ENCODE measurements at regions of chr5 and their contacts with region 1.

Region 1: GRCh38 chr5:81751009-81751835 is at the start of gene SSBP2:
- DNase-seq: peak; percentile 98
- H3K4me3 Mint-ChIP-seq: peak within 1 kb of the TSS; percentile 92
- H3K27ac Mint-ChIP-seq: peak within 1 kb of the TSS; percentile 80
- H3K4me1 Mint-ChIP-seq: peaks cover 27% of the 10 kb centered on the region
- H3K27me3 Mint-ChIP-seq: no peaks in the 10 kb centered on the region
- total RNA-seq, gene SSBP2: 14.5 to 14.7 TPM

Region 2: DNA sequence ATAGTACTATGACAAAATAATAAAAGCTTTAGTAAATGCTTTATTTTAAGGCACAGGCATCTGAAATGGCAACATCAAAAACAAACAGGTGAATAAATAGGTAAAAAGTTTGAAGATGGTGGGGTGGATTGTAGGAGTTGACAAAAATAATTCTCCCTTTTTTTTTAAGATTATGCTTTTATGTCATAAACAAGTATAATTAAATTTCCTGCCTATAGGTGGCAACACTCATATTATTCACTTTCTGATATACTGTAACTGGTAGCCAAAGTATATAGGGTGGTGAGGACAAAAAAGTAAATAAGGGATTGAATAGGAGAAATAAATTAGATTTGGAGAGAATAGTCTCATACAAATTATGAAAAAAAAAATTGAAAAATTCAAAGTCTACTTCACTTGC is 237.2 kb before region 1 on chr5:
- CTCF ChIA-PET with region 1: interaction called, 3 read pairs
- intact Hi-C with region 1: loop called (anchors 1 kb)
- DNase-seq: no peak
- H3K4me3 Mint-ChIP-seq: no peak overlapping the region
- H3K27ac Mint-ChIP-seq: no peak overlapping the region
- H3K4me1 Mint-ChIP-seq: no peaks in the 10 kb centered on the region
- H3K27me3 Mint-ChIP-seq: no peaks in the 10 kb centered on the region

Region 3: GRCh38 chr5:81739291-81739690 is 11.9 kb before region 1 on chr5:
- CTCF ChIA-PET with region 1: interaction called, 3 read pairs
- intact Hi-C with region 1: loop called (anchors 1 kb)
- DNase-seq: no peak
- H3K4me3 Mint-ChIP-seq: no peak overlapping the region
- H3K27ac Mint-ChIP-seq: no peak overlapping the region
- H3K4me1 Mint-ChIP-seq: peaks cover 34% of the 10 kb centered on the region
- H3K27me3 Mint-ChIP-seq: no peaks in the 10 kb centered on the region

Region 4: GRCh38 chr5:81851481-81852178 is 100.4 kb after region 1 on chr5:
- CTCF ChIA-PET with region 1: interaction called, 5 read pairs
- intact Hi-C with region 1: loop called (anchors 1 kb)
- DNase-seq: peak; percentile 91
- H3K4me3 Mint-ChIP-seq: peak overlapping the region; percentile 86
- H3K27ac Mint-ChIP-seq: peak overlapping the region; percentile 92
- H3K4me1 Mint-ChIP-seq: peaks cover 40% of the 10 kb centered on the region
- H3K27me3 Mint-ChIP-seq: no peaks in the 10 kb centered on the region

Region 5: GRCh38 chr5:82165740-82166530 is 414.7 kb after region 1 on chr5:
- CTCF ChIA-PET with region 1: no interaction called
- intact Hi-C with region 1: loop called (anchors 1 kb)
- DNase-seq: peak; percentile 56
- H3K4me3 Mint-ChIP-seq: no peak overlapping the region
- H3K27ac Mint-ChIP-seq: no peak overlapping the region
- H3K4me1 Mint-ChIP-seq: peaks cover 15% of the 10 kb centered on the region
- H3K27me3 Mint-ChIP-seq: no peaks in the 10 kb centered on the region

Region 6: GRCh38 chr5:82356808-82357671 is 605.8 kb after region 1 on chr5:
- CTCF ChIA-PET with region 1: no interaction called
- intact Hi-C with region 1: loop called (anchors 1 kb)
- DNase-seq: peak; percentile 91
- H3K4me3 Mint-ChIP-seq: peak overlapping the region; percentile 54
- H3K27ac Mint-ChIP-seq: peak overlapping the region; percentile 97
- H3K4me1 Mint-ChIP-seq: peaks cover 50% of the 10 kb centered on the region
- H3K27me3 Mint-ChIP-seq: no peaks in the 10 kb centered on the region

Measured in activated naive CD4-positive, alpha-beta T cell treated with anti-CD3 and anti-CD28 coated beads for 36 hours (primary cell).